Activated T-helper 1 cell treated with anti-CD3 and anti-CD28 coated beads, Interleukin-12 subunit alpha, Interleukin-12 subunit beta, Interleukin-2, Interleukin-4 antibody, amounts not matched to agents 30 ng/mL and 10 ng/mL and 1 ng/mL, durations not matched to agents 14 hours and 24 hours and 36 hours (primary cell): ENCODE measurements at regions of chr22 and their contacts with region 1.

Region 1: DNA sequence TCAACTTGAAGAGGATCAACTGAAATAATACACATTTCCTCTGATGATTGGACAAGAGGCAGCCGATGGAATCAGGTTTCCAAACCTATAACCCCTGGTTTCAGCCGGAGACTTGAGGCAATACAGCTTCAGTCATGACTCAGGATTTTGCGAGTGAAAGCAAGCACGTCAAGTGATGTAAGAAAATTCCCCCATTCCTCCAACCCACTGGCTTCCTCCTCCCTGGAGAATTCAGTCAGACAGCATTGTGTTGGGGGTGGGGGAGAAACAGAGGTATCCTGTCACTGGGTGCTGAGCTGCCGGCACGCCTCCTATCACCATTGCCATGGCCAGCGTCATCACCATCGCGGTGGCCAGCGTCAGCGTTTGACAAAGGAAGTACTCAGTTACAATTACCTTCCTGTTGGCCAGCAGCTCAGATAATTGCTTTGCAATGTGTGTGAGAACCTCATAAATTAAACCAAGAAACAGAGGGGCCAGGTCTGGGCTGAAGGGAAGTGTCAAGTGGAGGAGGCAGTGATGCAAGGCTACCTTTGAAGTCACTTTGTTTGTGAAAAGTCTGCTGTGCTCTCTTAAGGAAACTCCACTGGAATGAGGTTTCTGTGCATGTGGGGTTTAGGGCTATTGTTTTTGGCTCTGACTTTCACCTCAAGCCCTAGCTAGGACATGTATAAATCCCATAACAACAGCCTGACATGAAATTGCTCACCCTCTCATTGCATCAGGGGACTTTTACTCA is 50.2 kb downstream of the LIF start:
- DNase-seq: peak; percentile 59
- H3K4me3 Mint-ChIP-seq: peak overlapping the region; percentile 64
- H3K27ac Mint-ChIP-seq: peak overlapping the region; percentile 96
- H3K4me1 Mint-ChIP-seq: peaks cover 74% of the 10 kb centered on the region
- H3K27me3 Mint-ChIP-seq: no peaks in the 10 kb centered on the region

Region 2: DNA sequence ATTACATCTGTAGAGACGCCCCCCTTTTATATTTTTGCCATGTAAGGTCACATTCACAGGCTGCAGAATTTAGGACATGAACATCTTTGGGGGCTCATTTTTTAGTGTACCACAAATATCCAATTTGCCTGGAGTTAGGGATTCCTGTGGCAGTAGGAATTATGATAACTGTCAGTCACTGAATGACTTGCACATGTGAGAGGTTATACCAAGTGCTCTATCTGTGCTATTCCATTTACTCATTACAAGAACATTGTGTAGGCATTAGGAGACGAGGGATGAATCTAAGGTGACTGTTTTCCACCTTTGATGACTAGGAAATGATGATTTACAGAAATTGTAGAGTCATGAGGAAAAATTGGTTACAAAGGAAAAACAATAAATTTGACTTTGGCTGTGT is 29.0 kb before region 1 on chr22:
- intact Hi-C with region 1: loop called (anchors 1 kb)
- DNase-seq: no peak
- H3K4me3 Mint-ChIP-seq: no peak overlapping the region
- H3K27ac Mint-ChIP-seq: no peak overlapping the region
- H3K4me1 Mint-ChIP-seq: peaks cover 16% of the 10 kb centered on the region
- H3K27me3 Mint-ChIP-seq: no peaks in the 10 kb centered on the region

Region 3: GRCh38 chr22:30183861-30184278 is 12.4 kb before region 1 on chr22:
- intact Hi-C with region 1: loop called (anchors 1 kb)
- DNase-seq: peak; percentile 25
- H3K4me3 Mint-ChIP-seq: peak overlapping the region; percentile 69
- H3K27ac Mint-ChIP-seq: peak overlapping the region; percentile 95
- H3K4me1 Mint-ChIP-seq: peaks cover 96% of the 10 kb centered on the region
- H3K27me3 Mint-ChIP-seq: no peaks in the 10 kb centered on the region

Region 4: GRCh38 chr22:30221121-30221992 is 25.0 kb after region 1 on chr22:
- intact Hi-C with region 1: loop called (anchors 2 kb)
- DNase-seq: peak; percentile 61
- H3K4me3 Mint-ChIP-seq: peak overlapping the region; percentile 65
- H3K27ac Mint-ChIP-seq: peak overlapping the region; percentile 89
- H3K4me1 Mint-ChIP-seq: peaks cover 74% of the 10 kb centered on the region
- H3K27me3 Mint-ChIP-seq: no peaks in the 10 kb centered on the region

Region 5: DNA sequence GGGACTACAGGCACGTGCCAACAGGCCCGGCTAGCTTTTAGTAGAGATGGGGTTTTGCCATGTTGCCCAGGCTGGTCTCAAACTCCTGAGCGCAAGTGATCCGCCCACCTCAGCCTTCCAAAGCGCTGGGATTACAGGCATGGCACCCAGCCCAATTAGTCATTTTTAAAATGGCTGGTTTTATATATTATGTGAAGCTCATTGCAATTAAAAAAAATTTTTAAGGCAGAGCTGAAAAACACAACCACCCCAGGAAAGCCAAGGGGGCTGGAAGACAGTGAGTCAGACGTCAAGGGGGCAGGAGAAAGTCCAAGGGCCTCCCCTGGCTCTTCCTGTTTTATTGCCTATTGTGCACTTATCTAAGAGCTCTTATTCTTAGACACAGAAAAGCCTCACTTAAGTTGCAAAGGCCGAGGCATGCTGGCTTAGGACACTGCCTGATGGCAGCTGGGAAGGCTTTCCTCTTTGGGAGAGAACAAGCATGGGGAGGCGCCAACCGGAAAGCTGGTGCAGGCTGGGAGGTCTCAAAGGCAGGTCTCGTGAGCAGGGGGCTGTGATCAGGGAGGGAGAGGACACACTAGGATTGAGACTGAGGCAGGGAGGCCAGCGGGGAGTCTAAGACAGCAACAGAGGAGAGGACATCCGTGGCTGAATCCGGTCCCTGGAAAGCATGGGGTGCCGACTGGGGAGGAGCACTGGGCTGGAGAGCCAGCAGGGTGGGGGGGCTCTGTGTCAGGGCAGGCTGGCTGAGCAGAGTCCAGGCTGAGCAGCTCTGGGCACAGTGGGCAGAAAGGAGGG is 81.4 kb after region 1 on chr22:
- intact Hi-C with region 1: no loop called
- DNase-seq: no peak
- H3K4me3 Mint-ChIP-seq: no peak overlapping the region
- H3K27ac Mint-ChIP-seq: peak overlapping the region; percentile 27
- H3K4me1 Mint-ChIP-seq: peaks cover 72% of the 10 kb centered on the region
- H3K27me3 Mint-ChIP-seq: no peaks in the 10 kb centered on the region

Region 6: GRCh38 chr22:30562366-30562765 is 366.1 kb after region 1 on chr22:
- intact Hi-C with region 1: no loop called
- DNase-seq: no peak
- H3K4me3 Mint-ChIP-seq: no peak overlapping the region
- H3K27ac Mint-ChIP-seq: no peak overlapping the region
- H3K4me1 Mint-ChIP-seq: no peaks in the 10 kb centered on the region
- H3K27me3 Mint-ChIP-seq: peaks cover 3% of the 10 kb centered on the region